Right cardiac atrium (tissue), 5 donors: ENCODE measurements at regions of chr1 and their contacts with region 1.

Region 1: DNA sequence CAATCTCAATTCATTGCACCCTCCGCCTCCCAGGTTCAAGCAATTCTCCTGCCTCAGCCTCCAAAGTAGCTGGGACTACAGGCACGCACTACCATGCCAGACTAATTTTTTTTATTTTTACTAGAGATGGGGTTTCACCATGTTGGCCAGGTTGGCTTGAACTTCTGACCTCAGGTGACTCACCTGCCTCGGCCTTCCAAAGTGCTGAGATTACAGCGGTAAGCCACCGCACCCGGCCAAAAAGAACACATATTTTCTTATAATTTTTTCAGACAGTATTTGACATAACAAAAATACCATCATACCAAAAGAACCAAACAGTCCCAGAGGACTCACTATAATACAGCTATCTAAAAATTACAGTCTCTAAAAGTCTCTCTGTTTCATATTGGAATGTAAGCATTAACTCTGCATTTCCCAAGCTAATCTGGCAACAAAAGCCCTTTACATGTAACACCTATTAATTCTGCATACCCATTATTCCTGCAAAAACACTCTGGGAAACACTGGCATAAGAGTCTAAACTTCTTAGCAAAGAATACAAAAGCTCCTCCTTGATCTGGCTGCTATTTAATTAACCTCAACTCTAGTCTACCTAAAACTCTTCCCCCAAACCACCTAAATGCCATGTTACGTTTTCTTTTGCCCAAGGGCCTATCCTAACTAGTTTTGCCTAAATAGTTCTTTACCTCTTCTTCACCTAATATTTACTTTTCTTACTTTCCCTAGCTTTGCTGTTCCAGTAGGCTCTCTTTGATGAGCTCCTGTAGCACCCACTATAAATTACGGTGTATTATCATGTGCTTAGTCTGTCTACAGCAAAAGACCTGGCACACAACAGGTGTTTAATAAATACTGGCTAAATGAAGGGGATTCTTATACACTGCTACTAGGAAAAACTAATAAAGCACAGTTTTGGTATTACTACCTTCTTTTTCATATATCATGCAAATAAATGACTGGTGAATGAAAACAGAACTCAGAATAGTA is 26.7 kb downstream of the WDR26 start:
- DNase-seq: no peak
- ATAC-seq: no peak
- H3K4me3 ChIP-seq: no peak overlapping the region
- H3K27ac ChIP-seq: no peak overlapping the region
- H3K4me1 ChIP-seq: no peaks in the 10 kb centered on the region
- H3K27me3 ChIP-seq: no peaks in the 10 kb centered on the region

Region 2: DNA sequence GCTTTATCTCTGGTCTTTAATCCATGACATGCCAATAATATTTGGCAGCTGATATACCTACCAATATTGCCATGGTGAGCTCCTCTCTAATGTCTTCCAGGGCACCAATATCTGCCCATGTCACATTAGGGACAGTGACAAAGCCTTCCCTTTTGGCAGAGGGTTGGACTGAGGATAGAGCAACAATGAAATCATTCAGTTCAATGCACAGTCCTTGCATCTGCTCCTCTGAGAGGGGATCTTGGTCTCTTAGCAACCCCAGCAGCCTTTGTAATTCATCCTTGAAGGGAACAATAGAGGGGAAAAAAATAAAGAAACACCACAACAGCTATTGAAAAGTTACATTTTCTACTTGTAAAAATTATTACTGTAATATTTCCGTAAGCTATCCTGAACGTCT is 120.2 kb before region 1 on chr1:
- intact Hi-C with region 1: loop called in 1 of 4 experiments (anchors 10 kb)
- DNase-seq: no peak
- ATAC-seq: no peak
- H3K4me3 ChIP-seq: no peak overlapping the region
- H3K27ac ChIP-seq: no peak overlapping the region
- H3K4me1 ChIP-seq: no peaks in the 10 kb centered on the region
- H3K27me3 ChIP-seq: no peaks in the 10 kb centered on the region

Region 3: GRCh38 chr1:224300314-224300713 is 107.6 kb before region 1 on chr1:
- intact Hi-C with region 1: loop called in 1 of 4 experiments (anchors 10 kb)
- DNase-seq: no peak
- ATAC-seq: no peak
- H3K4me3 ChIP-seq: no peak overlapping the region
- H3K27ac ChIP-seq: no peak overlapping the region
- H3K4me1 ChIP-seq: no peaks in the 10 kb centered on the region
- H3K27me3 ChIP-seq: no peaks in the 10 kb centered on the region

Region 4: GRCh38 chr1:224358237-224358636 is 49.6 kb before region 1 on chr1:
- intact Hi-C with region 1: no loop called
- DNase-seq: no peak
- ATAC-seq: no peak
- H3K4me3 ChIP-seq: peak overlapping the region; percentile 78
- H3K27ac ChIP-seq: no peak overlapping the region
- H3K4me1 ChIP-seq: peaks cover 9% of the 10 kb centered on the region
- H3K27me3 ChIP-seq: no peaks in the 10 kb centered on the region